ENCODE measurements at regions of chr6 and their contacts with region 1.

Region 1: DNA sequence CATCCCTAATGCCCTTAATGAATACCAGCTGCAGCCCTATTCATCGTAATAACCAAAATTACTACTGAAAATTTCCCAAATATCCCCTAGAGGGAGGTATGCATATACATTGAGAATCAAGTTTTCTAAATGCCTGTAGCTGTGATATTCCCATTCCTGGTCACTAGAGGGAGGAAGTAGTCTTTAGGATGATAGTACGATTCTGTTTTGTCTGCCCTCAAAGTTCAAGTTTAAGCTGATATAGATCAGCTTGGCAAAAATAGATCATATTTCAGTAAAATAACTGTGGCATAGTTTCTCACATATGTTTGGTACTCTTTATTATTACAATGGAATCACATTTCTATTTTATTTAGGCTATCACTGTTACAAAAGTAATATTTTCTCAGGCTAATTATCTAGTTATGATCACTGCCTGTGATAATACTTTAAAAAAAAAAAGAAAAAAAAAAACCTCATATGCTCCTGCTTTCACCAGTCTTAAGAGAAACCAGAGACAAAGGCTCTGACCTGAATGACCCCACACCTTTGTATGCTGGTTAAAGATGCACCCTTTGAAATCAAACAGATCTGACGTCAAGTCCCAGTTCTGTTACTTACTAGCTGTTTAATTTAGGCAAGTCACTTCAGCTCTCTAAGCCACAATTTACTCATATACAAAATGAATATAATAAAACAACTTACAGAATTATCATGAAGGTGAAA is 11.0 kb downstream of the TSPYL1 start:
- DNase-seq: peak; percentile 65
- H3K4me3 ChIP-seq: no peak overlapping the region
- H3K27ac ChIP-seq: no peak overlapping the region
- H3K27me3 ChIP-seq: no peaks in the 10 kb centered on the region
- CTCF ChIP-seq: peak; percentile 96

Region 2: DNA sequence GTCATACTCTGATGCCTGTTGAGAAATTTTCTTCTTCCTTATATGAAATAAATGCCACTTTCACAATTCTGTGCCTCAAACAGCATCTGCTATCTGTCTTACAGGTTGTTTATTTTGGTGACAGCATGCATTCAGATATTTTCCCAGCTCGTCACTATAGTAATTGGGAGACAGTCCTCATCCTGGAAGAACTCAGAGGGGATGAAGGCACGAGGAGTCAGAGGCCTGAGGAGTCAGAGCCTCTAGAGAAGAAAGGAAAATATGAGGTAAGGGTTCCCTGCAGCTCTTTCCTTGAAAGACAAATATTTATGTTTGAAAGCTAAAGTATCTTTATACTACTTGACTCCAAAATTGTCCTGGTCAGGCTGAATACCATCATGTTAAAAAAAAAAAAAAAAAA is 30.7 kb before region 1 on chr6:
- CTCF ChIA-PET with region 1: interaction called, 12 read pairs
- POLR2A ChIA-PET with region 1: no interaction called
- DNase-seq: no peak
- H3K4me3 ChIP-seq: no peak overlapping the region
- H3K27ac ChIP-seq: no peak overlapping the region
- H3K27me3 ChIP-seq: no peaks in the 10 kb centered on the region
- CTCF ChIP-seq: no peak

Region 3: DNA sequence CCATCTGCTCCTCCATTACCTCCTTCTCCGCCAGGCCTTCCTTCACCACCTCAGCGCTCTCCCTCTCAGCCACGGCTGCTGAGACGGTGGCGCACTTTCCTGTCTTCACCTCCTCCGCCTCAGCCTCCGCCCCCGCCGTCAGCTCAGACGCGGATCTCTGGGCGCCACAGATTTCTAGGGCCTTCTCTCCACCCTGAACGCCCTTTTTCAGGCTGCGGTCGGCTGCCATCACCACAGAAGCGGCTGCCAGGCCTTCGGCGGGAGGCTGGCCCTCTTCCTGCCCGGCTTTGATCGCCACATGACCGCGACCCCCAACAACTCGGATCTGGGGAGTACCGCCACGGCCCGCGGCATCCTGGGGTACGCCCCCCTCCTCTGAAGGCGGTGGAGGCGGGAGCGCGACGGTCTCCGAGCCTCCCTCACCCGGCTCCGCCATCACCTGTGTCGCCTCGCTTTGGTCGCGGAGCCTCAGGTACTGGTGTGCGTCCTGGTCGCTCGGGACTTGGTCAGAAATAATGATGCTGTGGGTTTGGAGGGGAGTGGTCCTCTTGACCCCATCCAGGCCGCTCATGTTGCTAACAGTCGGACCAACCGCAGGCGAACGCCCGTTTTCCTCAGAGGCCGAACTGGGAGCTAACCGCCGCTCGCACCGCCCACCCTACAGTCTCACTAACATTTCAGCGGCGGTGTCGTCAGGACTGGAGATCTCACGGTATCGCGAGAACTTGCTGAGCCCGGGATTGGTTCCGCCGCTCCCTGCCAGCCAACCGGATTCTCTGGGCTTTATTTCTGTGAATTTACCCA is 10.7 kb after region 1 on chr6 and contains the start of gene TSPYL1:
- CTCF ChIA-PET with region 1: interaction called, 66 read pairs
- POLR2A ChIA-PET with region 1: interaction called, 4 read pairs
- DNase-seq: peak; percentile 92
- H3K4me3 ChIP-seq: peak within 1 kb of the TSS; percentile 88
- H3K27ac ChIP-seq: peak within 1 kb of the TSS; percentile 97
- H3K27me3 ChIP-seq: no peaks in the 10 kb centered on the region
- CTCF ChIP-seq: 0 out of 2 replicates have a peak, but pooled peaks have one; percentile 6
- polyA plus RNA-seq, gene TSPYL1: 65.9 and 71.9 TPM in 2 replicates

Region 4: GRCh38 chr6:116511404-116512110 is 242.8 kb after region 1 on chr6 and contains the start of gene CALHM5:
- CTCF ChIA-PET with region 1: interaction called, 59 read pairs
- POLR2A ChIA-PET with region 1: no interaction called
- DNase-seq: peak; percentile 78
- H3K4me3 ChIP-seq: peak within 1 kb of the TSS; percentile 66
- H3K27ac ChIP-seq: peak within 1 kb of the TSS; percentile 94
- H3K27me3 ChIP-seq: no peaks in the 10 kb centered on the region
- CTCF ChIP-seq: peak; percentile 83
- polyA plus RNA-seq, gene CALHM5: 6.8 and 7.7 TPM in 2 replicates

Region 5: DNA sequence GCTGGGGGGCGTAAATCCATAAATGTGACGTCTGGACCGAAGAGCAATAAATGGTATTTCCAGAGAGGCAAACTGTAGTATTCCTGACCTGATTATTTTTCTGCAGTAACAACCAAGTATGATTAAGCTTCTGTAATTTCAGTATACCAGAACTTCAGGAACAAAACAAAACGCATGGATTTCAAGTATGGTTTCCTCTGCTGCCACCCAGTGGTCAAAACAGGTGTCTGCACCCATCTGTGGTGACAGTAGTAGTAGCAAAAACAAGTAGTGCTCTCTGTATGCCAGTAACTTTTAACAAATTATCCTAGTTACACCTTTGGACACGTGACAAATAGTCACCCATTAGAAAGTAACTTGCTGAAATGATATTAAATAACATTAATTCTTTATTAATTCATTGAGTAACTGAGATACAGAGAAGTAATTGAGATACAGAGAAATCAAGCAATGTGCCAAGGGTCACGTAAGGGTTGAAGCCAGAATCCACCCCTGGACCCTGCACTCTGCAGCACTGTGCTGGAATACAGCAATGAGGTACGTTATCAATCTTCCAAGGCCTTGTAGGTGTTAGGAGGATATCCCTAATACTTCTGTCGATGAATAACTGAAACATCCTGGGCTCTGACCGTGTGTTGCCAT is 292.8 kb after region 1 on chr6:
- CTCF ChIA-PET with region 1: interaction called, 160 read pairs
- POLR2A ChIA-PET with region 1: no interaction called
- DNase-seq: peak; percentile 51
- H3K4me3 ChIP-seq: no peak overlapping the region
- H3K27ac ChIP-seq: no peak overlapping the region
- H3K27me3 ChIP-seq: no peaks in the 10 kb centered on the region
- CTCF ChIP-seq: peak; percentile 91

Region 6: DNA sequence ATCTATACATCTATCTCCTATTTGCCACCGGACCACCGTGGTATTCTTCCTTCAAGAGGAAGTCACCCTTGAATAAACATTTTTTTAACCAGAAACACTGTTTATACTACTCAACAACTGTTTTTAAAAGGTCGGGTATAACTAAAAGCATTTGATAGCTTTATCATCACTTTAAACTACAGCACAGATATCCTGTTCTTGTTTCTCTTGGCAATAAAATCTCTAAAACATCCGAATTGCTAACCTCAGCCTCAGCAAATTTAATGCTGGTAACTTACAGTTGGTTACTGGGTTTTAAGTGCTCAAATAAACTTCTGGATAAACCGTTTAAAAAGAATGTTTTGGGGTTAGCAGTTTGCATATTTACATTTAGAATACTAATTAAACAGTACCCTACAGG is 379.4 kb after region 1 on chr6:
- CTCF ChIA-PET with region 1: interaction called, 11 read pairs
- POLR2A ChIA-PET with region 1: no interaction called
- DNase-seq: no peak
- H3K4me3 ChIP-seq: no peak overlapping the region
- H3K27ac ChIP-seq: no peak overlapping the region
- H3K27me3 ChIP-seq: no peaks in the 10 kb centered on the region
- CTCF ChIP-seq: no peak